ENCODE measurements at regions of chr17 and their contacts with region 1.

Region 1: DNA sequence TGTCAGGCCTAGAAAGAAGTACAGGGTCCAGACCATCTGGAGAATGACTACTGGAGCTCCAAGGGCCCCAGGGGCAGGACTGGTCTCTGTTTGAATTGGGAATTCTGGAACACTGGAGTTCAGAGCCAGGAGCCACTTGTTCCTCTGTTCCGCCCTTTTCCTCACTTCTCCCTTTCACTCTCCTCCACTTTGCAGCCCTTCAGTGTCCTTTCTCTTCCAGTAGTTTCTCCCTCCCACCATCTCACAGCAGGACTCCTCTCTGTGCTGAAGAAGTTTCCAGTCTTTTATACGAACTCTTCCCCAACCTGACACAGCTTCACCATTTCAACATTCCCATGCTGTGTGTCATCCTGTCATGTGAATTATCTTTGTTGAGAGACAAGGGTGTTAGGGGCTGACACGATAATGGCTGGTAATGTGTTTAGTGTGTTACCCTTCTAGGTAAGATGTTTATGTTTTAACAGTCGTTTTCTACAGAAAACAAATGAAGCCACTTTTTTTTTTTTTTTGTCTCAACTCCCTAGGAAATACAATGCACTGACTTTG is 180.3 kb upstream of the MYOCD start:
- DNase-seq: no peak
- ATAC-seq: no peak
- H3K4me3 ChIP-seq: no peak overlapping the region
- H3K27ac ChIP-seq: no peak overlapping the region
- H3K4me1 ChIP-seq: no peaks in the 10 kb centered on the region
- H3K27me3 ChIP-seq: no peaks in the 10 kb centered on the region
- CTCF ChIP-seq: no peak
- EP300 ChIP-seq: no peak
- POLR2A ChIP-seq: no peak
- RAD21 ChIP-seq: no peak

Region 2: GRCh38 chr17:12365805-12366204 is 119.6 kb before region 1 on chr17:
- CTCF ChIA-PET with region 1: no interaction called
- POLR2A ChIA-PET with region 1: no interaction called
- RAD21 ChIA-PET with region 1: no interaction called
- SMC1A ChIA-PET with region 1: no interaction called
- in situ Hi-C with region 1: loop called (anchors 25 kb)
- intact Hi-C with region 1: no loop called
- DNase-seq: no peak
- ATAC-seq: no peak
- H3K4me3 ChIP-seq: no peak overlapping the region
- H3K27ac ChIP-seq: no peak overlapping the region
- H3K4me1 ChIP-seq: no peaks in the 10 kb centered on the region
- H3K27me3 ChIP-seq: no peaks in the 10 kb centered on the region
- CTCF ChIP-seq: no peak
- EP300 ChIP-seq: no peak
- POLR2A ChIP-seq: no peak
- RAD21 ChIP-seq: no peak

Region 3: DNA sequence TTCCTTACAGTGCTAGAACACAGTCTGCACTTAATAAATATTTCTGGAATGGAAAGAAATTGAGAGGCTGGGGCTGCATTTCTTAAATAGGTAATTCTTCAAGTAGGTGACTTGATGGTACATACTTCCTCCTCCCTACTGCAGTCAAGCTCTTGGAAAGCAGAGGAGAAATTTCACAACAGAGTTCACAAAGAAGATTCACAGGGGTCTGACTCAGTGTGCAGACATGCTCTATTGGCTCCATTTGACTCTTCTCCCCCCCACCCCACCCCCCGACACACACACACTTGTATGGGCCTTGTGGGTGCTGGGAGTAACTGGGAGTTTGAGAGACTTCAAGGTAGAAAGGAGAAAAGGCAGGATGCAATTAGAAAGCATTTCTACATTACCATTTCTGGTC is 174.1 kb after region 1 on chr17:
- CTCF ChIA-PET with region 1: no interaction called
- POLR2A ChIA-PET with region 1: no interaction called
- RAD21 ChIA-PET with region 1: no interaction called
- SMC1A ChIA-PET with region 1: no interaction called
- in situ Hi-C with region 1: no loop called
- intact Hi-C with region 1: no loop called
- DNase-seq: no peak
- ATAC-seq: no peak
- H3K4me3 ChIP-seq: no peak overlapping the region
- H3K27ac ChIP-seq: no peak overlapping the region
- H3K4me1 ChIP-seq: no peaks in the 10 kb centered on the region
- H3K27me3 ChIP-seq: no peaks in the 10 kb centered on the region
- CTCF ChIP-seq: no peak
- EP300 ChIP-seq: no peak
- POLR2A ChIP-seq: no peak
- RAD21 ChIP-seq: no peak